Activated CD8-positive, alpha-beta memory T cell treated with anti-CD3 and anti-CD28 coated beads, Interleukin-2, amount 10 ng/mL, durations not matched to agents 7 days and 5 days (primary cell): ENCODE measurements at regions of chr9 and their contacts with region 1.

Region 1: DNA sequence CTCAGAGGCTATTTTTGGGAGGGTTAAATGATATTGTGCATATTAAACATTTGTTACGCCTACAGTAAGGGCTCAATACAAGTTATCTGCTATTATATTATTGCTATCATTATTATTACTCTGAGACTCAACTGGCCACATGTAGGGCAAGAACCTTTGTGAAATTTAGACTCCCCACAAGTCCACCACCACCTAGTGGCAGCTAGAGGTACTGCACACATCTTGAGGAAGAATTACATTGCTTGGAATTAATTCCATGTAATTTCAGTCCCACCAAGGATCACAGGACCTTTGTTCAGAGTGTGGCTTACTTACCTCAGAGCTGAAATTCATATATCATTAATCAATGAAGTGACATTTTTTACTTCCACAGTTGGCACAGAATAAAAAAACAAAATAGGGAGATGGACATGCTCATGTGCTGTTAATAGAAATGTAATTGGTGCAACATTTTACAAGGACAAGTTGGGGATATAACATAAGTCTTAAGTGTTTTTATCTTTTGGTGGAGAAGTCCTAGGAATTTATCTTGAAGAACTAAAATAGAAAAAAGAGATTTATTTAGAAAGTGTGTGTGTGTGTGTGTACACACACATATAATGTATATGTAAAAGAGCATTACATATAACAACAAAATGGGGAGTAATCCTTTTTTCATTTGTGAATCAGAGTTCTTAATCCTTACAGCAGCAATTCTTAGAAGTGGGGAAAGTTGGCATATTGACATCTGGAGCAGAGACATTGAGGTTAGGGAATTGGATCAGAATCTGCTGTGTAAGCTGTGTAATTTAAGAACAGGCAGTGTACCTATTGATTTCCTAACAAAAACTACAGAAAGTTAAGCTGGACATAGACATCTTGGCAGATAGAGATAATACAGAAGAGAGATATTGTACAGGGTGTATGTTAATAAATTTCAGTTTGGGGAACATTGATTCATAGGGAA is 11.2 kb downstream of the MSANTD3 start:
- DNase-seq: peak; percentile 71
- ATAC-seq: peak; percentile 30
- H3K4me3 Mint-ChIP-seq: no peak overlapping the region
- H3K27ac Mint-ChIP-seq: no peak overlapping the region
- H3K4me1 Mint-ChIP-seq: no peaks in the 10 kb centered on the region
- H3K27me3 Mint-ChIP-seq: no peaks in the 10 kb centered on the region

Region 2: DNA sequence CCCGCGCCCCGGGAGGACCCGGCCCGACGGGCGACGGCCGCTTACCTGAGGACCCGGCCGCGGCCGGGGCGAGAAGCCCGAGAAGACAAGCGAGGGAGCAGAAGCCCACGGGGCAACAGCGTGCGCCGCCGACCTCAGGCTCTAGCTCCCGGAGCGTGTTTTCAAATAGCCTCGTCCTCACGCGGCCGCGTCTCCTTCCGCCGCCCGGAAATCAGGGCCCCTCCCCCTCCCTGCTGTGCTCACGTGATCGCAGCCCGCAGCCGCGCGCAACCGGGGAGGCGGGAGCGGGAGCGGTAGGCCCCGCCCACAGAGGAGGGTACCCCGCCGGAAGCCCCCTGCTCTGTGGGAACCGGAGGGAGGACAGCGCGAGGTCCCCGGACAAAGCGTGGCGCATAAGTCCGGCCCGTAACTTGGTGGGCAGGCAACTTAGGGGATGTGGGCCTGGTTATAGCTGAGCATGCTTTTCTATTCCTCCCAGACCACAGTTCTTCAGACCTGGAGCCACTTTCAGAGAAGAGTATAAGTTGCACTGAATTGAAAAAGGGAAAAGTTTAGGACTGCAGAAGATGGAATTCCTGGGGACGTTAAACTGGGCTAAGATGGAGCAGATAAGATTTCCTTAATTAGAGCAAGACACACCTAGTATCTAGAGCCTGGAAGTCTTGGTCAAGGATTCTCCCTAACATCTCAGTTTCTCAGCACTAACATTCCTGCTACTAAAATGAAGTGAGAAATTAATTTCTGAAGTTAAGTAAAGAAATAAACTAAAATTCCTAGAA is 85.2 kb before region 1 on chr9 and contains the start of gene TEX10:
- CTCF ChIA-PET with region 1: interaction called, 15 read pairs
- DNase-seq: peak; percentile 91
- ATAC-seq: peak; percentile 88
- H3K4me3 Mint-ChIP-seq: peak within 1 kb of the TSS; percentile 98
- H3K27ac Mint-ChIP-seq: peak within 1 kb of the TSS; percentile 90
- H3K4me1 Mint-ChIP-seq: peaks cover 48% of the 10 kb centered on the region
- H3K27me3 Mint-ChIP-seq: no peaks in the 10 kb centered on the region
- total RNA-seq, gene TEX10: 21.0 to 24.4 TPM

Region 3: GRCh38 chr9:100411472-100412283 is 26.5 kb before region 1 on chr9:
- CTCF ChIA-PET with region 1: interaction called, 10 read pairs
- DNase-seq: peak; percentile 93
- ATAC-seq: peak; percentile 100
- H3K4me3 Mint-ChIP-seq: peak overlapping the region; percentile 74
- H3K27ac Mint-ChIP-seq: peak overlapping the region; percentile 72
- H3K4me1 Mint-ChIP-seq: peaks cover 19% of the 10 kb centered on the region
- H3K27me3 Mint-ChIP-seq: peaks cover 24% of the 10 kb centered on the region

Region 4: DNA sequence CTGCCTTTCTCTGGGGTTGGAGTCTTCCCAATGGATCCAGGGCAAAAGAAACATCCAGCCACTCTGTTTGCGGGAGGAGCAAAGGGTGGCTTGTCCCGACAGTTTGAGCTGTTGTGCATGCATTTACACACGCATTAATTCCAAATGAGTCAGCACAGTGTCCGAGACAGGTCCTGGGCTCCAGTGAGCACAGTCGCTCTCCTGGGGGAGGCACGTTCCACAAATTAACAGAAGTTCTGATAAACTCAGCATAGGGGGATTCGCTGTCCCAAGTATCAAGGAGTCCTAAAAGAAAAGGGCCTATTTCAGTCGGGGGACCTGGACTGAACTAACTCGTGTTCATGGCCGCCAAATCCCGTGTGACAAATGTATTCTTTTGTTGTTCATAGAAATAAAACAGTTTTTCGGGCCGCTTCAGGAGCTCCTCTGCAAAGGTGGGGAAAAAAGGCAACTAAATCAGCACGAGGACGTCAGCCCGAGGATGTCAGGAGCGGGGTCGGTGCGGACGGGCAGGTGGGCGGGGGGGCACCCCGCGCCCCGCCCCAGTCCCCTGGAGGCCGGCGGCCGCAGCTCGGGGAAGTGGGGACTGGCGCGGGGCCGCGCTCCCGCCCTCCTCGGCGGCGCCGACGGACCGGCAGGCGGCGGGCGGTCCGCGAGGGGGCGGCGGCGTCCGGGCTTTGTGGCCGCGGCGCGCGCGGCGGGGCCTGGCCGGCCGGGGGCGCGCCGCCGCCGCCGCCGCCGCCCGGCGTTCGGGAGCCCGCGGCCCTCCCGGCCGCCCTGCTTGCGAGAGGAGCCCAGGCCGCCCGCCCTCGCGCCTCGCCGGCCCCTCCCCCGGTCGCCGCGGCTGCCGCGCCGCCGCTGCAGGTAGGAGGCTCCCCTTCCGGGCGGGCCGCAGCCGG is 11.4 kb before region 1 on chr9 and contains the start of gene MSANTD3:
- CTCF ChIA-PET with region 1: interaction called, 15 read pairs
- DNase-seq: peak; percentile 62
- ATAC-seq: peak; percentile 87
- H3K4me3 Mint-ChIP-seq: peak within 1 kb of the TSS; percentile 84
- H3K27ac Mint-ChIP-seq: peak within 1 kb of the TSS; percentile 83
- H3K4me1 Mint-ChIP-seq: peaks cover 28% of the 10 kb centered on the region
- H3K27me3 Mint-ChIP-seq: peaks cover 13% of the 10 kb centered on the region
- total RNA-seq, gene MSANTD3: 20.5 to 20.9 TPM